Lower lobe of right lung (tissue), 2 donors: ENCODE measurements at regions of chr11 and their contacts with region 1.

Region 1: GRCh38 chr11:12281571-12282478 is 95.5 kb upstream of the PARVA start:
- DNase-seq: peak; percentile 85
- ATAC-seq: peak; percentile 80 to 82
- H3K4me3 ChIP-seq: no peak overlapping the region
- H3K27ac ChIP-seq: no peak overlapping the region
- H3K4me1 ChIP-seq: peaks cover 23% of the 10 kb centered on the region
- H3K27me3 ChIP-seq: no peaks in the 10 kb centered on the region
- CTCF ChIP-seq: peak; percentile 96

Region 2: GRCh38 chr11:11916981-11917399 is 364.8 kb before region 1 on chr11:
- intact Hi-C with region 1: no loop called
- DNase-seq: no peak
- ATAC-seq: no peak
- H3K4me3 ChIP-seq: no peak overlapping the region
- H3K27ac ChIP-seq: no peak overlapping the region
- H3K4me1 ChIP-seq: no peaks in the 10 kb centered on the region
- H3K27me3 ChIP-seq: no peaks in the 10 kb centered on the region
- CTCF ChIP-seq: no peak

Region 3: GRCh38 chr11:12043959-12044819 is 237.6 kb before region 1 on chr11:
- intact Hi-C with region 1: loop called (anchors 10 kb)
- DNase-seq: peak; percentile 84
- ATAC-seq: peak; percentile 83 to 90
- H3K4me3 ChIP-seq: peak overlapping the region; percentile 19
- H3K27ac ChIP-seq: peak overlapping the region; percentile 77
- H3K4me1 ChIP-seq: peaks cover 27% of the 10 kb centered on the region
- H3K27me3 ChIP-seq: no peaks in the 10 kb centered on the region
- CTCF ChIP-seq: peak; percentile 90

Region 4: DNA sequence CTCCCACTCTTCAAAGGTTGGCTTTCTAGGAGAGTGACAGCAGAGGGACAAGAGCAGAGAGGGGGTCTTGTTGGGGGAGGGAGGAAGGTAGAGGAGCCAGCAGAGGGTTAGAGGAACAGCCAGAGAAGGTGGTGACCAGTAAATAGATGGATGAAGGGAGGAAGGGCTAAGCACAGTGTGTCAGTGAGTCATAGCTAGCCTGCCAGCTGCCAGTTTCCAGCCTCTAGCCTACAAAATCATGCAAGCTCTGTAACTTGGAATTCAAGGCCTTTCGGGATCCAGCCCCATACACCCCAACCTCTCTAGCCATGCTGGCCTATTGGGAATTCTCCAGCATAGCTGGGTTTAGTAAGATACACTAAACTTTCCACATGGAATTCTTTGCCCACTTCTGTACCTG is 245.0 kb after region 1 on chr11:
- intact Hi-C with region 1: no loop called
- DNase-seq: no peak
- ATAC-seq: no peak
- H3K4me3 ChIP-seq: no peak overlapping the region
- H3K27ac ChIP-seq: no peak overlapping the region
- H3K4me1 ChIP-seq: peaks cover 12% of the 10 kb centered on the region
- H3K27me3 ChIP-seq: no peaks in the 10 kb centered on the region
- CTCF ChIP-seq: no peak